Natural killer cell (primary cell): ENCODE measurements at regions of chr17 and their contacts with region 1.

Region 1: GRCh38 chr17:82236142-82236981 is 7.5 kb downstream of the SLC16A3 start:
- DNase-seq: peak; percentile 72 to 86
- ATAC-seq: peak; percentile 44 to 57 (median 46)
- H3K4me3 ChIP-seq: no peak overlapping the region
- H3K4me3 Mint-ChIP-seq: no peak overlapping the region
- H3K27ac ChIP-seq: peak overlapping the region; percentile 27
- H3K27ac Mint-ChIP-seq: peak overlapping the region; percentile 58 to 72
- H3K4me1 ChIP-seq: peaks cover 70% of the 10 kb centered on the region
- H3K4me1 Mint-ChIP-seq: peaks cover 27 to 56% of the 10 kb centered on the region in 2 donors
- H3K27me3 ChIP-seq: no peaks in the 10 kb centered on the region
- H3K27me3 Mint-ChIP-seq: no peaks in the 10 kb centered on the region
- CTCF ChIP-seq: peak; percentile 82

Region 2: DNA sequence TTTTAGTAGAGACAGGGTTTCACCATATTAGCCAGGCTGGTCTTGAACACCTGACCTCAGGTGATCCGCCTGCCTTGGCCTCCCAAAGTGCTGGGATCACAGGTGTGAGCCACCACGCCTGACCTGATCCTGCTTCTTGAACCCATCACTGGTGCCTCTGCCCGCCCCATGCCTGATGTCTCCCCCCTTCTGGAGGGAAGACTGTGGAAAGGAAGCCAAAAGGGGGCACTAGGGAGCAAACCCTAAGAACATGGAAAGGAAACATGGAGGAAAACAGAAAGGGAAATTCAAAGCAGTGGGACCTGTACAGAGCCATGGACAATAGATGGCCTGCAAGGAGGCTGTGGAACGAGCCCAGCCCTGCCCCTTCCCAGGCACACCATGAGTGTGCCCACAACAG is 107.3 kb before region 1 on chr17:
- intact Hi-C with region 1: no loop called
- DNase-seq: no peak
- ATAC-seq: no peak
- H3K4me3 ChIP-seq: no peak overlapping the region
- H3K4me3 Mint-ChIP-seq: no peak overlapping the region
- H3K27ac ChIP-seq: no peak overlapping the region
- H3K27ac Mint-ChIP-seq: no peak overlapping the region
- H3K4me1 ChIP-seq: peaks cover 27% of the 10 kb centered on the region
- H3K4me1 Mint-ChIP-seq: peaks cover 8 to 11% of the 10 kb centered on the region in 2 donors
- H3K27me3 ChIP-seq: no peaks in the 10 kb centered on the region
- H3K27me3 Mint-ChIP-seq: no peaks in the 10 kb centered on the region
- CTCF ChIP-seq: no peak

Region 3: GRCh38 chr17:82320956-82321927 is 84.9 kb after region 1 on chr17:
- intact Hi-C with region 1: loop called (anchors 1 kb)
- DNase-seq: peak; percentile 72 to 93
- ATAC-seq: peak; percentile 39 to 61 (median 52)
- H3K4me3 ChIP-seq: no peak overlapping the region
- H3K4me3 Mint-ChIP-seq: peak overlapping the region; percentile 71
- H3K27ac ChIP-seq: no peak overlapping the region
- H3K27ac Mint-ChIP-seq: peak overlapping the region in 1 of 2 donors; percentile 64
- H3K4me1 ChIP-seq: peaks cover 43% of the 10 kb centered on the region
- H3K4me1 Mint-ChIP-seq: peaks cover 9 to 11% of the 10 kb centered on the region in 2 donors
- H3K27me3 ChIP-seq: no peaks in the 10 kb centered on the region
- H3K27me3 Mint-ChIP-seq: no peaks in the 10 kb centered on the region
- CTCF ChIP-seq: peak; percentile 99

Region 4: GRCh38 chr17:82332669-82333278 is 96.4 kb after region 1 on chr17:
- intact Hi-C with region 1: no loop called
- DNase-seq: peak in 1 of 2 donors; percentile 60
- ATAC-seq: peak; percentile 61 to 69 (median 63)
- H3K4me3 ChIP-seq: peak overlapping the region; percentile 45
- H3K4me3 Mint-ChIP-seq: peak overlapping the region; percentile 79
- H3K27ac ChIP-seq: no peak overlapping the region
- H3K27ac Mint-ChIP-seq: peak overlapping the region in 1 of 2 donors; percentile 73
- H3K4me1 ChIP-seq: peaks cover 36% of the 10 kb centered on the region
- H3K4me1 Mint-ChIP-seq: peaks cover 18 to 28% of the 10 kb centered on the region in 2 donors
- H3K27me3 ChIP-seq: peaks cover 3% of the 10 kb centered on the region
- H3K27me3 Mint-ChIP-seq: peaks cover 0 to 4% of the 10 kb centered on the region in 2 donors
- CTCF ChIP-seq: no peak